ENCODE measurements at regions of chr2 and their contacts with region 1.

Region 1: GRCh38 chr2:68121873-68122679 is 35.6 kb upstream of the PNO1 start:
- DNase-seq: peak; percentile 91
- ATAC-seq: peak; percentile 88
- H3K4me3 Mint-ChIP-seq: peak overlapping the region; percentile 35; the same call in 1 of the 2 replicates
- H3K27ac Mint-ChIP-seq: no peak overlapping the region
- H3K4me1 Mint-ChIP-seq: peaks cover 4% of the 10 kb centered on the region
- H3K27me3 Mint-ChIP-seq: no peaks in the 10 kb centered on the region
- CTCF ChIP-seq: peak; percentile 94

Region 2: DNA sequence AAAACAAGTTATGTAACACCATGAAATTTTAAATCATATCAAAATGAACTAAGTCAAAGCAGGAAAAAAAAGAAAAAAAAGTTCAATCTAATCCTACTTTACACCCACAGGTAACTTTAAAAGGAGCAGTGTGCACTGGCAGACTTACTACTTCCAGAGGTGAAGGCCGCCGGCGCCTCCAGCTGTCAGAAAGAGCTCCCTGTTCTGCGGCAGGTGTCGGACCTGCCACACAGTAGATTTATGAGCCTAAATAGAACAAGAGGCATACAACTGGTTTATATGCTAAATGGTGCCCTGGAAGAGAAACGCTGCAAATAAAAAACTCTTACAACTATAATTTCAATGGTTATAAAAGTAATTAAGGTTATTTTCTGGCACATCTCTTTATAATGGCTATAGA is 12.5 kb after region 1 on chr2:
- CTCF ChIA-PET with region 1: interaction called, 17 read pairs
- POLR2A ChIA-PET with region 1: no interaction called
- DNase-seq: no peak
- ATAC-seq: no peak
- H3K4me3 Mint-ChIP-seq: no peak overlapping the region
- H3K27ac Mint-ChIP-seq: no peak overlapping the region
- H3K4me1 Mint-ChIP-seq: no peaks in the 10 kb centered on the region
- H3K27me3 Mint-ChIP-seq: no peaks in the 10 kb centered on the region
- CTCF ChIP-seq: no peak

Region 3: DNA sequence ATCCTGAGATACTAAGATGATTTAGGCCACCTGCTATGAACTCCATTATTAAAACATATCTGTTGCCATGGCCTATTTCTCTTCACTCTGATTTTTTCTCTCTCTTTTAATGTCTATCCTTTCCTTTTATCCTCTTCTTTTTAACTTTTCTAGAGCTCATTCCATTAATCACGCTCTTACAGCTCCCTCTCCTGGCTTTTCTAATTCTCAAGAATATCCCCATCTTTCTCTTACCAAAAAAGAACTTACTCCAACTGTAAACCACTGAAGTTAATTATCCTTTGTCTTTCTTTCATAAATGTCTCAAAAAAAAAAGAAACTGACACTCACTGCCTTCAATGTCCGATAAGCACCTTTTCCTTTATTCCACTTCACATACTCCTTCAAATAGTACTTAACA is 122.4 kb after region 1 on chr2:
- CTCF ChIA-PET with region 1: interaction called, 12 read pairs
- POLR2A ChIA-PET with region 1: no interaction called
- DNase-seq: no peak
- ATAC-seq: no peak; the same call in 1 of the 2 replicates
- H3K4me3 Mint-ChIP-seq: no peak overlapping the region
- H3K27ac Mint-ChIP-seq: no peak overlapping the region
- H3K4me1 Mint-ChIP-seq: peaks cover 19% of the 10 kb centered on the region
- H3K27me3 Mint-ChIP-seq: no peaks in the 10 kb centered on the region
- CTCF ChIP-seq: no peak

Region 4: GRCh38 chr2:68295516-68295915 is 173.4 kb after region 1 on chr2:
- CTCF ChIA-PET with region 1: interaction called, 33 read pairs
- POLR2A ChIA-PET with region 1: no interaction called
- DNase-seq: no peak
- ATAC-seq: no peak
- H3K4me3 Mint-ChIP-seq: no peak overlapping the region
- H3K27ac Mint-ChIP-seq: no peak overlapping the region
- H3K4me1 Mint-ChIP-seq: no peaks in the 10 kb centered on the region
- H3K27me3 Mint-ChIP-seq: peaks cover 7% of the 10 kb centered on the region; the same call in 1 of the 2 replicates
- CTCF ChIP-seq: no peak

Region 5: GRCh38 chr2:68441179-68441993 is 319.3 kb after region 1 on chr2:
- CTCF ChIA-PET with region 1: interaction called, 10 read pairs
- POLR2A ChIA-PET with region 1: no interaction called
- DNase-seq: peak; percentile 79
- ATAC-seq: peak; percentile 96
- H3K4me3 Mint-ChIP-seq: no peak overlapping the region
- H3K27ac Mint-ChIP-seq: no peak overlapping the region
- H3K4me1 Mint-ChIP-seq: peaks cover 9% of the 10 kb centered on the region
- H3K27me3 Mint-ChIP-seq: no peaks in the 10 kb centered on the region
- CTCF ChIP-seq: peak; percentile 93